Sigmoid colon (tissue), 7 donors: ENCODE measurements at regions of chr2 and their contacts with region 1.

Region 1: DNA sequence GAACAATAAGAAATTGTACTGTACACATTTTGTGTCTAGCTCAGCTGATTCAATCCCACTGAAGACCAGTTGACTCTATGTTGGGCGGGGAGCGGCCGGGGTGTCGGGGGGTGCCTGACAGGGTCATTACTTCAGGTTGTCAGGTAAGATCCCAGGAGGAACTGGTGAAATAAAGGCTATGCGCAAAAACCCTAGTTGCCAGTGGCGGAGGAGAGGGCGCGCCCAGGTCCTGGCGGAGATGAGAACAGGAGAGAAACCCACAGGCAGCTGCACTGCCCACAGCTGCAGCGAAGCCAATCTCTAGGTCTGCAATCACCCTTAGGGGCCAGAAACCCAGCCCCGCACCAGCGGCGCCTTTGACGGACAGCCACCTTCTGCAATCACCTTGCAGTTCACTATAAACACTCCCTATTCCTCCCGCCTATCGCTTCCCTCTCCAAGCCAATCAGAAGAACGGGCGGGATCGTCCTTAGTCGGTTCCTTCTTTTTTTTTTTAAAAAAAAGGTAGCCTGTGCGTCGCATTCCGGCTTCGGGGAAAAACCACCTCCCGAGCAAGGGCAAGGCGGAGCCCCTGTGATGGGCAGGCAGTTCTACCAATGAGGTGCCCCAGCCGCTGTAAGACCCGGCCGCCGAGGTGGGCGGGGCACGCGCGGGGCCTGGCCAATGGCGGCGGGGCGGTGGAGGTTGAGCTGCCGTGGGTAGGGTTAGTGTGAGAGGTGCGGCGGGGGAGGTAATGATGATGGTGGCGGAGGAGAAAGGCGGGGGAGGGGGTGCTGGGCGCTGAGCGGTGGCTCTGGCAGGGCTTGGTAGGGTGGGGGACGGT is at the start of gene EHBP1:
- DNase-seq: peak; percentile 100
- H3K4me3 ChIP-seq: peak within 1 kb of the TSS; percentile 79 to 98 (median 94)
- H3K27ac ChIP-seq: peak within 1 kb of the TSS; percentile 94 to 99 (median 98)
- H3K4me1 ChIP-seq: peaks cover 0 to 57% (median 40%) of the 10 kb centered on the region in 4 donors
- H3K27me3 ChIP-seq: no peaks in the 10 kb centered on the region
- CTCF ChIP-seq: no peak
- EP300 ChIP-seq: peak in 1 of 4 donors; percentile 42
- POLR2A ChIP-seq: peak; percentile 82 to 84
- total RNA-seq, gene EHBP1: 121 to 161 (median 153) TPM

Region 2: GRCh38 chr2:62456721-62457539 is 248.3 kb before region 1 on chr2:
- intact Hi-C with region 1: loop called (anchors 5 kb)
- DNase-seq: peak; percentile 85
- H3K4me3 ChIP-seq: peak overlapping the region; percentile 57 to 74 (median 62)
- H3K27ac ChIP-seq: peak overlapping the region; percentile 84 to 86 (median 84)
- H3K4me1 ChIP-seq: peaks cover 0 to 31% (median 24%) of the 10 kb centered on the region in 4 donors
- H3K27me3 ChIP-seq: no peaks in the 10 kb centered on the region
- CTCF ChIP-seq: peak; percentile 96 to 99 (median 98)
- EP300 ChIP-seq: no peak
- POLR2A ChIP-seq: no peak

Region 3: GRCh38 chr2:62505750-62506420 is 199.3 kb before region 1 on chr2 and contains the start of gene TMEM17:
- intact Hi-C with region 1: loop called (anchors 2 kb)
- DNase-seq: peak; percentile 97
- H3K4me3 ChIP-seq: peak within 1 kb of the TSS; percentile 44 to 71 (median 66)
- H3K27ac ChIP-seq: peak within 1 kb of the TSS; percentile 89 to 92 (median 90)
- H3K4me1 ChIP-seq: peaks cover 0 to 15% (median 7%) of the 10 kb centered on the region in 4 donors
- H3K27me3 ChIP-seq: no peaks in the 10 kb centered on the region
- CTCF ChIP-seq: no peak
- EP300 ChIP-seq: peak in 1 of 4 donors; percentile 34
- POLR2A ChIP-seq: no peak
- total RNA-seq, gene TMEM17: 1.5 to 3.4 (median 2.1) TPM

Region 4: DNA sequence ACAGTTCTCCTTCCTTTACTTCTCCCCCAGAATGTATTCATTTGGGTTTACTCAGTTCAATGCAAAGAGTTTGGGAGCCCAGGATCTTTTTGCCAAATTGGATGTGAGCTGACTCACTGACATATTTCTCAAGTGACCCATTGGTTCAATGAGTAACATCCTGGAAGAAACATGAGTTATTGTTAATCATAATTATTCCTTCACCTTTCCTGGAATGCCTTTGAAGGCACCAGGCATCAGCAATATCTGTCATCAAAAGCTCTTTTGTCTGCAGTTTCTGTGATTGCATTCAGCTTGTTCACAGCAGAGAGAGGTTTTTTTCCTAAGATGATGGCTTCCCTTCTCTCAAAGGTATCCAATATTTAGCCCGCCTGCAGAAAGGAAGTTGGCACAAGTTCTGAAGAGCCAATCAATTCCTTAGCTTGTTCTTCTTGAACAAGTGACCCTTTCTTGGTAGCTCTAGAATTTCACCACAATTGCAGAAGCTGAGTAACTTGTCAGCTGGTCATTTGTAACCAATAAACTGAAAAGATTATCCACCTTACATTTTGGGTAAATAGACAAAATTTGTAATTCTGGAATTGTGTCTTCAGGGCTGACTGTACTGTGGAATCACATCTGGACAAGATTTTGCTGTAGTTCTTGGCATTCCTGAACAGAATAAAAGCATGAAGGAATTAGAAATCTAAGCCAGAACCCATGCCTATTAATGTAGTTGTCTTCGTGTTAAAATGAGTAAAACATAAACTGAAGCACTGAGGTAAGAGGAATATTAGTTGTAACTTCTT is 127.0 kb before region 1 on chr2:
- intact Hi-C with region 1: loop called (anchors 10 kb)
- DNase-seq: no peak
- H3K4me3 ChIP-seq: no peak overlapping the region
- H3K27ac ChIP-seq: peak overlapping the region; percentile 10 to 64 (median 56)
- H3K4me1 ChIP-seq: peaks cover 0 to 36% (median 28%) of the 10 kb centered on the region in 4 donors
- H3K27me3 ChIP-seq: no peaks in the 10 kb centered on the region
- CTCF ChIP-seq: no peak
- EP300 ChIP-seq: no peak
- POLR2A ChIP-seq: no peak

Region 5: DNA sequence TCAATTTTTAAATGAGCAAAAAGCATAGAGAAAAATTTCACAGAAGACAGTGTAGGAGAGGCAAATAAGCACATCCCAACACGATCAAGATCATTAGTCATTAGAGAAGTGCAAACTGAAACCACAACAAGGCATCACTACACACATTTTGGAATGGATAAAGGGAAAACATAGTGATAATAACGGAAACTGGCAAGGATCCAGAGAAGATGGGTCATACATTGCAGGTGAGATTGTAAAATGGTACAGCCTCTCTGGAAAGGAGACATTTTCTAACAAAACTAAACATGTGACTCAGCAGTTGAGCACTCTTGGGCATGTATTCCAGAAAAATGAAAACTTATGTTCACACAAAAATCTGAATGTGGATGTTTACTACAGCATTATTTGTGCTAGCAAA is 100.9 kb before region 1 on chr2:
- intact Hi-C with region 1: no loop called
- DNase-seq: no peak
- H3K4me3 ChIP-seq: no peak overlapping the region
- H3K27ac ChIP-seq: no peak overlapping the region
- H3K4me1 ChIP-seq: no peaks in the 10 kb centered on the region
- H3K27me3 ChIP-seq: no peaks in the 10 kb centered on the region
- CTCF ChIP-seq: no peak
- EP300 ChIP-seq: no peak
- POLR2A ChIP-seq: no peak

Region 6: GRCh38 chr2:62660582-62661262 is 44.5 kb before region 1 on chr2:
- intact Hi-C with region 1: loop called (anchors 2 kb)
- DNase-seq: no peak
- H3K4me3 ChIP-seq: no peak overlapping the region
- H3K27ac ChIP-seq: peak overlapping the region; percentile 41 to 85 (median 82)
- H3K4me1 ChIP-seq: peaks cover 0 to 72% (median 60%) of the 10 kb centered on the region in 4 donors
- H3K27me3 ChIP-seq: no peaks in the 10 kb centered on the region
- CTCF ChIP-seq: no peak
- EP300 ChIP-seq: no peak
- POLR2A ChIP-seq: no peak